ENCODE measurements at regions of chr1 and their contacts with region 1.

Region 1: DNA sequence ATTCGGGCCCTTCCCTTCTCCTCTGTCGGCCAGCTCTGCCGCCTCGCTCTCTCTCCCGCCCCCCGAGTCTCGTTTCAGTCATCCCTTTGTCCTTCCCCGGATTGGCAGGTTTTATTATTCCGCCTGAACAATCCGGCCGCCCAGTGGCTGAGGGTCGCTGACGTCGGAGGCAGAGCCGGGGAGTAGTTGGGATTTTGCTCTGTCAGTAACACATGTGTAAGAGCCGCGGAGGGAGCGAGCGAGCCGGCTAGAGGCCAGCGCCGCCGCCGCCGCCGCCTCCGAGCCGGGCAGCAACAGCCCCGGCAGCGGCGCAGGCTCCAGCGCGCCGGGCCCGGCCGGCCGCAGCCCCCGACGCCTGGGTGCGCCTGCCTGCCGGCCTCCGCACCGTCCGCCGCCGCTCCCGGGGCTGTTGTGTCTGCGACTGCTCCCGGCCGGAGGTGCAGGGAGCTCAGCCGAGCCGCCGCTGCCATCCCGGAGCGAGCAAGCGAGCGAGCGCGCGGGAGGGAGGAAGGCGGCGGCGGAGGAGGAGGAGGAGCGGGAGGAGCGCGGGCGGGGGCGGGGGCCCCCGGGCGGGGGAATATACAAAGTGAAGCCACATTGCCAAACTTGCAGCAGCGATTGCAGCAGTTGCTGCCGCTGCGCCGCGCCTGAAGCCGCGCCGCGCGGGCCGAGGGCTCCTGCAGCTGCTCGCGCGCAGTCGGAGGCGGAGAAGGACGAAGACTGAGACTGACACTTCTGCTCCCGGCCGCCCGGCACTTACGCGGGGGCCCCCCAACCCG is at the start of gene LMO4:
- DNase-seq: peak; percentile 91
- H3K4me3 Mint-ChIP-seq: peak within 1 kb of the TSS; percentile 91
- H3K27ac Mint-ChIP-seq: peak within 1 kb of the TSS; percentile 81
- H3K4me1 Mint-ChIP-seq: peaks cover 33% of the 10 kb centered on the region
- H3K27me3 Mint-ChIP-seq: peaks cover 24% of the 10 kb centered on the region
- total RNA-seq, gene LMO4: 15.5 to 19.5 TPM

Region 2: GRCh38 chr1:86704458-86704971 is 623.9 kb before region 1 on chr1 and contains the start of gene SH3GLB1:
- CTCF ChIA-PET with region 1: no interaction called
- intact Hi-C with region 1: loop called (anchors 1 kb)
- DNase-seq: peak; percentile 90
- H3K4me3 Mint-ChIP-seq: peak within 1 kb of the TSS; percentile 93
- H3K27ac Mint-ChIP-seq: peak within 1 kb of the TSS; percentile 98
- H3K4me1 Mint-ChIP-seq: peaks cover 40% of the 10 kb centered on the region
- H3K27me3 Mint-ChIP-seq: no peaks in the 10 kb centered on the region
- total RNA-seq, gene SH3GLB1: 45.0 to 45.5 TPM

Region 3: GRCh38 chr1:87045761-87046304 is 282.6 kb before region 1 on chr1:
- CTCF ChIA-PET with region 1: no interaction called
- intact Hi-C with region 1: loop called (anchors 1 kb)
- DNase-seq: peak; percentile 82
- H3K4me3 Mint-ChIP-seq: peak overlapping the region; percentile 33
- H3K27ac Mint-ChIP-seq: peak overlapping the region; percentile 79
- H3K4me1 Mint-ChIP-seq: peaks cover 45% of the 10 kb centered on the region
- H3K27me3 Mint-ChIP-seq: no peaks in the 10 kb centered on the region

Region 4: GRCh38 chr1:87279966-87280535 is 48.4 kb before region 1 on chr1:
- CTCF ChIA-PET with region 1: no interaction called
- intact Hi-C with region 1: no loop called
- DNase-seq: no peak
- H3K4me3 Mint-ChIP-seq: no peak overlapping the region
- H3K27ac Mint-ChIP-seq: no peak overlapping the region
- H3K4me1 Mint-ChIP-seq: no peaks in the 10 kb centered on the region
- H3K27me3 Mint-ChIP-seq: peaks cover 7% of the 10 kb centered on the region

Region 5: DNA sequence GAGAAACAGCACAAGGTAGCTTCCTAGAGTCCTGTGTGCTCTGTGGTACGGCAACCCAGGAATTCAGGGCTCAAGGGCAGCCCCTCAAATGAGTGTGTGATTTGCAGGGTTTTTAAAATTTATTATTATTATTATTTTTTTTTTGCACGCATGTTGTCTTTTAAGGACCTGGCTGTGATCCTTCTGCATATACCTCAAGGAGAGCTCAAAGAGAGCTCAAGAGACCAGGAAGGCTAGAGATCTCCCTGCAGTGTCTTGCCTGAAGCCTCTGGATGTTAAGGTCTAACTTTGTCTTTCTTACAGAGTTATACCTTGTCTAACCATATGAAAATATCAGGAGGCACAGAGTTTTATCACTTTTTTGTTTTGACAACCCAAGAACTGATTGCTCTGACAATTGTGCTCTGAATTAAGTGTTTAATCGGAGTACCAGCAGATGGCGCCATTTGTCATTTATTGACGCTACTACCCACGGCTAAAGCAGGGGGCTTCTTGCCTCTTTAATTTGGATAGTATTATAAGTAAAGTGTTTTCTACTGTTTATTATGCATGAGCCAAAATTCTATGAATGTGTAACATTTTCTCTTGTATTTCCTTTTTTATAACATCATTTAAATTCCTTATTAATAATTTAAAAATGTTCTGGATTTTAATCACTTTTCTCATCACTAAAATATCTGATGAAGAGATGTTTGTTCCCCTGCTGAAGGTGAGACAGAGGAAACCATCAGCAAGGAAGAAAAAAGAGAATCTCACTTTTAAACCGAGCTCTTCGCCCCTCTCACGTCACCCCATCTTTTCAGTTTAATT is 35.6 kb before region 1 on chr1:
- CTCF ChIA-PET with region 1: interaction called, 3 read pairs
- intact Hi-C with region 1: loop called (anchors 2 kb)
- DNase-seq: peak; percentile 77
- H3K4me3 Mint-ChIP-seq: no peak overlapping the region
- H3K27ac Mint-ChIP-seq: no peak overlapping the region
- H3K4me1 Mint-ChIP-seq: no peaks in the 10 kb centered on the region
- H3K27me3 Mint-ChIP-seq: peaks cover 9% of the 10 kb centered on the region

Region 6: DNA sequence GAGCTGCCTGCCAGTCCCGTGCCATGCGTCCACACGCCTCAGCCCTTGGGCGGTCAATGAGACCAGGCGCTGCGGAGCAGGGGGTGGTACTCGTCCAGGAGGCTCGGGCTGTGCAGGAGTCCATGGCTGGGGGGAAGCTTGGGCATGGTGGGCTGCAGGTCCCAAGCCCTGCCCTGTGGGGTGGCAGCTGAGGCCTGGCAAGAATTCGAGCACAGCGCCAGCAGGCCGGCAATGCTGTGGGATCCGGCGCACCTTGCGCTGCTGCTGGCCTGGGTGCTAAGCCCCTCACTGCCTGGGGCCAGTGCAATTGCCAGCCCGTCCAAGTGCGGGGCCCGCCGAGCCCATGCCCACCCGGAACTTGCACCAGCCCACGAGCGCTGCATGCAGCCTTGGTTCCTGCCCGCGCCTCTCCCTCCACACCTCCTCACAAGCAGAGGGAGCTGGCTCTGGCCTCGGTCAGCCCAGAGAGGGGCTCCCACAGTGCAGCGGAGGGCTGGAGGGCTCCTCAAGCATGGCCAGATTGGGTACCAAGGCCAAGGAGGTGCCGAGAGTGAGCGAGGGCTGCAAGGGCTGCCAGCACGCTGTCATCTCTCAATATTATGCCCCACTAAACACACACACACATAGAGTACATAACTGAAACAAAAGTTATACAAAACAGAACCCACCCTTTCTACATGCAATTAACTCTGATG is 307.9 kb after region 1 on chr1:
- CTCF ChIA-PET with region 1: no interaction called
- intact Hi-C with region 1: loop called (anchors 10 kb)
- DNase-seq: no peak
- H3K4me3 Mint-ChIP-seq: no peak overlapping the region
- H3K27ac Mint-ChIP-seq: no peak overlapping the region
- H3K4me1 Mint-ChIP-seq: no peaks in the 10 kb centered on the region
- H3K27me3 Mint-ChIP-seq: no peaks in the 10 kb centered on the region

Region 7: DNA sequence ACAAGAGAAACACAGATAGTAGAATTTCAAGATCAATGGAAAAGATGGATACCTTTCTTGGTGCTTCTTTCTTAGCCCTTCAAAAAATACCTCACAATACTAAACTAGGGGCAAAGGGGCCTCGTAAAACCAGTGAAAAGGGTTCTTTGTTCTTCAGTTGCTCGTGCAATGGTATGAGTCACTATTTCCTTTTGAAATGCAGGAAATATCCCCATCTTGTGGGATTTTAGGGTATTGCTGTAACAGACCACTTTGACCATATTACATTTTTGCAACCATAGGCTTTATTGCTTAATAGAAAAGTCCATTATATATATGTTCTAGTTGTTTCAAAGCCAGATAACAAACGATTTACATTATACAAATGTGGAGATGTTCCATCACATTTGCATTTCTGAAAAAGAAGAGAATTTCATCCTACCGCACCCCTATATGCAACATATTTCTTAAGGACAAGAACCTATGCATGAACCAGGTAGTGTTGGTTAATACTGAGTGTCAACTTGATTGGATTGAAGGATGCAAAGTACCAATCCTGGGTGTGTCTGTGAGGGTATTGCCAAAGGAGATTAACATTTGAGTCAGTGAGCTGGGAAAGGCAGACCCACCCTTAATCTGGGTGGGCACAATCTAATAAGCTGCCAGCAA is 1267.0 kb after region 1 on chr1:
- CTCF ChIA-PET with region 1: no interaction called
- intact Hi-C with region 1: loop called (anchors 1 kb)
- DNase-seq: no peak
- H3K4me3 Mint-ChIP-seq: no peak overlapping the region
- H3K27ac Mint-ChIP-seq: no peak overlapping the region
- H3K4me1 Mint-ChIP-seq: peaks cover 4% of the 10 kb centered on the region
- H3K27me3 Mint-ChIP-seq: peaks cover 3% of the 10 kb centered on the region

Region 8: GRCh38 chr1:88891318-88891950 is 1563.0 kb after region 1 on chr1 and contains the start of gene GTF2B:
- CTCF ChIA-PET with region 1: no interaction called
- intact Hi-C with region 1: loop called (anchors 1 kb)
- DNase-seq: peak; percentile 97
- H3K4me3 Mint-ChIP-seq: peak within 1 kb of the TSS; percentile 82
- H3K27ac Mint-ChIP-seq: peak within 1 kb of the TSS; percentile 96
- H3K4me1 Mint-ChIP-seq: peaks cover 36% of the 10 kb centered on the region
- H3K27me3 Mint-ChIP-seq: no peaks in the 10 kb centered on the region
- total RNA-seq, gene GTF2B: 35.2 to 36.1 TPM